ENCODE measurements at regions of chr12 and their contacts with region 1.

Region 1: DNA sequence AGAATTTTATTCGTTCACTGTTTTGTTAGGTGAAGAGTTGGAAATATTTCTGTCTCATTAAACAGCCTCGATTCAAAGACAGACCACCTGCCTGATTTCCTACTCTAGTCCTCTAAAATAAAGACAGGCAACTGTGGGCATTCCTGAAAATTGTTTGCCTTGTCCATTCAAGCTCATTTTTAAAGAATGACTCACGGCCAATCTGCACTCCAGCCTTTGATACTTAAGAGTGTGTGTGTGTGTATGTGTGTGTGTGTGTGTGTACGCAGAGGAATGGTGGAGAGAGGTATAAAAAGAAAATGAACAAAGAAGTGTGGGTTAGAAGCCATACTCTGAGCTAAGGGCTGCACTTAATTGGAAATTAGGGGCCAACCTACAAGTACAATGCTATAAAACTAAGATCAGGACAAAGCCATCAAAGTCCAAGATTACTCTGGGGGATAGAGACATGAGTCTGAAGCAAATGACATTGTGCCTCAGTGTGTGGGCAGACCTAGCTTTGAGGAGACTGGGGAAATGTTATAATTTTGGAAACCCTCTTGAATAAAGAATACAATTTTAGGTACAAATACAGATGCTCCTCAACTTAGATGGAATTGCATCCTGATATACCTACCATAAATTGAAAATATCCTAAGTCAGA is 45.6 kb upstream of the SOCS2 start:
- DNase-seq: no peak
- ATAC-seq: no peak
- H3K4me3 ChIP-seq: no peak overlapping the region
- H3K4me3 Mint-ChIP-seq: no peak overlapping the region
- H3K27ac ChIP-seq: no peak overlapping the region
- H3K27ac Mint-ChIP-seq: no peak overlapping the region
- H3K4me1 ChIP-seq: peaks cover 0 to 3% of the 10 kb centered on the region in 2 experiments
- H3K4me1 Mint-ChIP-seq: peaks cover 9 to 16% (median 15%) of the 10 kb centered on the region in 3 donors
- H3K27me3 ChIP-seq: peaks cover 0 to 12% of the 10 kb centered on the region in 2 experiments
- H3K27me3 Mint-ChIP-seq: peaks cover 6 to 12% of the 10 kb centered on the region in 2 donors

Region 2: GRCh38 chr12:93453633-93454032 is 73.3 kb before region 1 on chr12:
- CTCF ChIA-PET with region 1: no interaction called
- POLR2A ChIA-PET with region 1: no interaction called
- DNase-seq: no peak
- ATAC-seq: no peak
- H3K4me3 ChIP-seq: no peak overlapping the region
- H3K4me3 Mint-ChIP-seq: no peak overlapping the region
- H3K27ac ChIP-seq: no peak overlapping the region
- H3K27ac Mint-ChIP-seq: no peak overlapping the region
- H3K4me1 ChIP-seq: peaks cover 3 to 4% of the 10 kb centered on the region in 2 experiments
- H3K4me1 Mint-ChIP-seq: peaks cover 9 to 14% (median 13%) of the 10 kb centered on the region in 3 donors
- H3K27me3 ChIP-seq: peaks cover 0 to 3% of the 10 kb centered on the region in 2 experiments
- H3K27me3 Mint-ChIP-seq: no peaks in the 10 kb centered on the region

Region 3: DNA sequence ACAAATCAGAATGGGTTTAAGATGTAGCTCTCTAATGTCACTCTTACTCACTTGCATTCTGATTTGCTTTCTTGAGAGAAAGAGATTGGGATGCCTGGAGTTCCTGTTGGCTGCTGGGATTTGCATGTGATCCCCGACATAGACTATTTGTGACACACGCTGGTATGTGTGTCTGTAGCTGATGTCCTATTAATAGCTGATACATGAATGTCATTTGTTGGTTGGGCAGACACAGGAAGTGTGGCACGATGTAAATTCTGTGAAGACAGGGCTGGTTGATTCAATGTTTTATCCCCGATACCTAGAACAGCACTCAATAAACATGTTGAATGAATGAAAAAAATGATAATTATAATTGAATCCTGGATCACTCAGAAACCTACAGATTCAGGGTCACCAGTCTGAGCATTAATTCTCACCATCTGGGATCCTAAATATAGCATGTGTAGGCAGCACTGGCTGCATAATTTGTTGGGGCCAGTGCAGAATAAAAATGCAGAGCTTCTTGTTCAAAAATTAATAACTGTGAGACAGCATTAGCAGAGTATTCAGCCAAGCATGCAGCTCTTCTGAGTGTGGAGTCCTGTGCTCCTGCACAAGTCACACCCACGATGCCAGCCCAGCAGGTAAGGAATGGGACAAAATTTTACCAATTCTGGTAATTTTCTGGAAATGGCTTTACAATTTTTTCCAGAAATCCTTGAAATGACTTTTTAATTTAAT is 10.0 kb after region 1 on chr12:
- CTCF ChIA-PET with region 1: interaction called in 1 of 2 experiments, 3 read pairs
- POLR2A ChIA-PET with region 1: interaction called in 1 of 2 experiments, 12 read pairs
- DNase-seq: peak in 1 of 35 experiments; percentile 5
- ATAC-seq: peak; percentile 19 to 47 (median 37)
- H3K4me3 ChIP-seq: no peak overlapping the region
- H3K4me3 Mint-ChIP-seq: no peak overlapping the region
- H3K27ac ChIP-seq: no peak overlapping the region
- H3K27ac Mint-ChIP-seq: no peak overlapping the region
- H3K4me1 ChIP-seq: peaks cover 1 to 16% of the 10 kb centered on the region in 2 experiments
- H3K4me1 Mint-ChIP-seq: peaks cover 21 to 45% (median 44%) of the 10 kb centered on the region in 3 donors
- H3K27me3 ChIP-seq: no peaks in the 10 kb centered on the region
- H3K27me3 Mint-ChIP-seq: no peaks in the 10 kb centered on the region

Region 4: GRCh38 chr12:93592641-93593406 is 65.9 kb after region 1 on chr12:
- CTCF ChIA-PET with region 1: no interaction called
- POLR2A ChIA-PET with region 1: interaction called in 1 of 2 experiments, 21 read pairs
- DNase-seq: no peak
- ATAC-seq: no peak
- H3K4me3 ChIP-seq: no peak overlapping the region
- H3K4me3 Mint-ChIP-seq: no peak overlapping the region
- H3K27ac ChIP-seq: no peak overlapping the region
- H3K27ac Mint-ChIP-seq: no peak overlapping the region
- H3K4me1 ChIP-seq: peaks cover 4 to 9% of the 10 kb centered on the region in 2 experiments
- H3K4me1 Mint-ChIP-seq: peaks cover 14 to 30% (median 24%) of the 10 kb centered on the region in 3 donors
- H3K27me3 ChIP-seq: peaks cover 0 to 20% of the 10 kb centered on the region in 2 experiments
- H3K27me3 Mint-ChIP-seq: peaks cover 50 to 54% of the 10 kb centered on the region in 2 donors